AG04450 (cell line): ENCODE measurements at regions of chr10 and their contacts with region 1.

Region 1: DNA sequence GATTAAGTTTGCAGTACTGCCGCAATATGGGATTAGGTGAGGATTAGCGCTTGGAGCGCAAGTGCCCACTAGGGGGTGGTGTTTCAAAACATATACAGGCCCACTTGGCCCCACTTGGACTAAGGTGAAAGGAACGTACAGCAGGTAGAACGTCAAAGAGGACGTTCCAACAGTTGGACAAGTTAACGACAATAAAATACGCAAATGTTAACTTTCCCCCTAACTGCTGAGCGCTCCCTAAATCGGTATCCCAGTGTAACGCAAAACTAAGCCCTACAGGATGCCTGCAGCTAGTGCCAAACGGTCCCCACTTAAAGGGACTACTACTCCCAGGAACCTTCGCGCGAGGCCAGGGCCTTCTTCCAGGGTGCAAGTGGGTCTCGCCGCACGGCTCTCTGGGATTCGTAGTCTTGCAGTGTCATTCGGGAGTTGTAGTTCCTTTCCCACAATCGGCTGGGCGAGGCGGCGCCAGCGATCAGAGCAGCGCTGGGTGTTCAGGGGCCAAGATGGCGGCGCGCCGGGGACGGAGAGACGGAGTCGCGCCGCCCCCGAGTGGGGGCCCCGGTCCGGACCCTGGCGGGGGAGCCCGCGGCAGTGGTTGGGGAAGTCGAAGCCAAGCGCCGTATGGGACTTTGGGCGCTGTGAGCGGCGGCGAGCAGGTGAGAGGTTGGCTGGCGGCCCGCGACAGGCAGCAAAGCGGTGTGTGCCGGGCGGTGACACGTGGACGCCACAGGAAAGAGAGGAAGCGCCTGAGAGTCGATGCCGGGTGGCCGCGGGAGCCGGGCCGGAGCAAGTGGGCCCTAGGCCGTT is at the start of gene PPRC1:
- DNase-seq: peak; percentile 97
- H3K4me3 ChIP-seq: peak within 1 kb of the TSS; percentile 96
- H3K27ac ChIP-seq: peak within 1 kb of the TSS; percentile 93
- H3K27me3 ChIP-seq: no peaks in the 10 kb centered on the region
- CTCF ChIP-seq: peak; percentile 95
- polyA plus RNA-seq, gene PPRC1: 14.1 and 18.5 TPM in 2 replicates

Region 2: GRCh38 chr10:101708073-101708472 is 424.7 kb before region 1 on chr10:
- CTCF ChIA-PET with region 1: no interaction called
- POLR2A ChIA-PET with region 1: no interaction called
- DNase-seq: no peak
- H3K4me3 ChIP-seq: no peak overlapping the region
- H3K27ac ChIP-seq: no peak overlapping the region
- H3K27me3 ChIP-seq: no peaks in the 10 kb centered on the region
- CTCF ChIP-seq: no peak

Region 3: GRCh38 chr10:102120991-102121753 is 11.6 kb before region 1 on chr10:
- CTCF ChIA-PET with region 1: interaction called, 23 read pairs
- POLR2A ChIA-PET with region 1: interaction called, 8 read pairs
- DNase-seq: peak; percentile 84
- H3K4me3 ChIP-seq: peak overlapping the region; percentile 91
- H3K27ac ChIP-seq: peak overlapping the region; percentile 96
- H3K27me3 ChIP-seq: no peaks in the 10 kb centered on the region
- CTCF ChIP-seq: no peak

Region 4: GRCh38 chr10:102195296-102195870 is 62.6 kb after region 1 on chr10:
- CTCF ChIA-PET with region 1: no interaction called
- POLR2A ChIA-PET with region 1: no interaction called
- DNase-seq: no peak
- H3K4me3 ChIP-seq: no peak overlapping the region
- H3K27ac ChIP-seq: no peak overlapping the region
- H3K27me3 ChIP-seq: peaks cover 5% of the 10 kb centered on the region
- CTCF ChIP-seq: no peak